Caco-2 (cell line): ENCODE measurements at regions of chr11 and their contacts with region 1.

Region 1: DNA sequence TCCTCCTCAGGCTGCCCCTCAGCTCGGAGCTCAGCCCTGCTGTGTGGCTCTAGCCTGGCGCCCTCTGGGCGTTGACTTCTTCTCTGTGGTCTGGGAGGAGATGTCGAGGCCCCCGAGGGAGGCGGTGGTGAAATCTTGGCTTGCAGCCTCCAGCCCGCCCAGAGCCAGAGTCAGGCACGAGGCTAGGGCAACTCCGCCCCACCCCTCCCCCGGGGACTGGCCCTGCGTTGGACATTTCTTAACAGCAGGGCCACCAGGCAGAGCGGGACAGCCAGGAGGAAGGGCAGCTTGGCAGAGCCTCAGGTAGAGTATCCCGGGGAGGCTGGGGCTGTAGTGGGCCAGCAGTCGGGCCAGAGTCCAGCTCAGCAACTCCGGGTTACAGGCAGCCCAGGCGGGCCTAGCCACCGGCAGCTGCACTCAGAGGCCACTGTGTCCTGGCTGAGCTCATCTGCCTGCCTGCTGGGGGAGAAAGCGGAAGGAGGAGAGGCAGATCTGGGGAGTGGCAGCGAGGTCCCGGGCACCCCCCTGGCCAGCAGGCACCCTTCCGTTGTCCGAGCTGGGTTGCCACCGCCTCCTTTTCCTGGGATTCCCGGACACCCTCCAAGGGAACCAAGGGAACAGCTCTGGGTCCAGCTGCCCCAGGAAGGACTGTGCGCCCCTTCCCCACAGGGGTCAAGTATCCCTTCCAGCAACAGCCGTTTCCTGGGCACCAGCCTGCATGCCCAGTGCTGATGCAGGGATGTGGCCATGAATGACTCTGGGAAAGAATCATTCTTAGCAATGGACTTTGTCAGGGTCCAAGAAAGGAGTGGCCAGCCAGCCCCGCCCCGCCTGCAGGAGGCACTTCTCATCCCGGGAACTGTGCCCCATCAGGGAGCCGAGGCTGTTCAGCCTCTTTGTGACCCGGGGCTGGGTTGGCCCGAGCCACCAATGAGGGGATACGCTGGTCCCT is at the start of gene ALDH3B1:
- DNase-seq: peak; percentile 90 to 94
- H3K4me3 ChIP-seq: peak within 1 kb of the TSS; percentile 22
- H3K4me3 Mint-ChIP-seq: peak within 1 kb of the TSS; percentile 79
- H3K27ac Mint-ChIP-seq: peak within 1 kb of the TSS; percentile 87
- H3K4me1 ChIP-seq: peaks cover 54% of the 10 kb centered on the region
- H3K4me1 Mint-ChIP-seq: peaks cover 30% of the 10 kb centered on the region
- H3K27me3 ChIP-seq: no peaks in the 10 kb centered on the region
- H3K27me3 Mint-ChIP-seq: no peaks in the 10 kb centered on the region
- CTCF ChIP-seq: no peak
- total RNA-seq, gene ALDH3B1: 8.2 and 9.1 TPM in 2 replicates

Region 2: GRCh38 chr11:68021167-68021787 is 10.9 kb after region 1 on chr11:
- CTCF ChIA-PET with region 1: interaction called, 9 read pairs
- POLR2A ChIA-PET with region 1: interaction called, 4 read pairs
- intact Hi-C with region 1: loop called (anchors 1 kb)
- DNase-seq: peak in 1 of 2 experiments; percentile 67
- H3K4me3 ChIP-seq: no peak overlapping the region
- H3K4me3 Mint-ChIP-seq: no peak overlapping the region
- H3K27ac Mint-ChIP-seq: no peak overlapping the region
- H3K4me1 ChIP-seq: peaks cover 16% of the 10 kb centered on the region
- H3K4me1 Mint-ChIP-seq: peaks cover 12% of the 10 kb centered on the region
- H3K27me3 ChIP-seq: no peaks in the 10 kb centered on the region
- H3K27me3 Mint-ChIP-seq: no peaks in the 10 kb centered on the region
- CTCF ChIP-seq: peak; percentile 27 to 59

Region 3: DNA sequence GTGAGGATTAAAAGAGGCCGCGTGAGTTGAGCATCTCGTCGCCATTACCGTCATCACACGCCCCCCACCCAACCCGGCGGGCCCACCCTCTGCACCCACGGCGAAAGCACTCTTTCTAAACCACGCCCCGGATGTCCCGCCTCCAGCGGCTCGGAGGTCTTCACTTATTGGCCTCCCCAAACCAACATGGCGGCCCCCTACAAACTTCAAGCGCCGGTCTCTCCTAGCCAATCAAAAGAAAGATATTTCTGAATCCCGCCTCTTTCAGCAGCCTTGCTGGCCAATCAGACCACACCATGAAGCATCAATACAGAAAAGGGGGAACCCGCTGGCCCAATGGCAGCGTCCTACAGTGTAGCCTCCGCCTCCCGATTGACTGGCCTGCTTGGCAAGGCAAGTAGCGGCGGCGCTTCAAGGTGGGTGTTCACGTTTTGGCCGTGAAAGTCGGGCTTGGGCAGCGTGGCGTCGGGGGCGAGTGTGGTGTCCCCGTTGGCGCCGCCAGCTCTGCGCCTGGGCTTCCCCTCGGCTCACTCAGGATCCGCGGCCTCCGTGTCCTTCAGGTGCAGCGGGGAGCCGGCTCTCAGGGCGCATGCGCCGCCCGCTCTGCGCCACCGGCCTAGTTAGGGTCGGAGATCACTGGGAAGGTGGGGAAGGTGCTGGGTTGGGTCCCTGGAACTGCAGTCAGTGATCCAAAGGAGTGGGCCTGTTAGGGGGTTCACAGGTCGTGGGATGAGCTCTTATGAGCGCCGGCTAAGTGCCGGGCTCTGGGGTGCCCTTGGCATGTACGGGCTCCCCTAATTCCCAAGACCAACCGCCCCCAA is 20.2 kb after region 1 on chr11 and contains the start of gene NDUFS8:
- CTCF ChIA-PET with region 1: interaction called, 5 read pairs
- POLR2A ChIA-PET with region 1: no interaction called
- intact Hi-C with region 1: loop called (anchors 1 kb)
- DNase-seq: peak; percentile 99 to 100
- H3K4me3 ChIP-seq: peak within 1 kb of the TSS; percentile 98
- H3K4me3 Mint-ChIP-seq: peak within 1 kb of the TSS; percentile 85
- H3K27ac Mint-ChIP-seq: peak within 1 kb of the TSS; percentile 90
- H3K4me1 ChIP-seq: peaks cover 13% of the 10 kb centered on the region
- H3K4me1 Mint-ChIP-seq: peaks cover 12% of the 10 kb centered on the region
- H3K27me3 ChIP-seq: no peaks in the 10 kb centered on the region
- H3K27me3 Mint-ChIP-seq: no peaks in the 10 kb centered on the region
- CTCF ChIP-seq: no peak
- total RNA-seq, gene NDUFS8: 309 and 334 TPM in 2 replicates

Region 4: DNA sequence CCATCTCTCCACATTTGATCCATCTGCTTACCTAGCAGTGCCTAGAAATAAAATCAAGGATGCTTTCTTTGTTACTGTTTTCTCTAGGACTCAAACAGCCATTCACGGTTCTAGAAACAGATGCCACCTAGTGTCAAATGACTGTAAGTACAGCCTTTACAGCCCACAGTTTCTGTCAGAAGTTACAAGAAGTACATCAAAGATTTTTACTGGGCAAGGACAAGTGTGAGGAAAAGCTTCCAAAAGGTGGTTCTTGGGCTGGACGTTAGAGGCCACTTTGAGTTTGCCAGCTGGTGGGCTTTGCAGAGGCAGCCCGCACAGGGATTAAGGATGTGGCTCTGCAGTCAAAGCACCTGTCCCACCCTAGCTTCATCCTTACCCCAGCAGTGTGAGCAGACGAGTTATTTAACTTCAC is 195.8 kb after region 1 on chr11:
- CTCF ChIA-PET with region 1: interaction called, 4 read pairs
- POLR2A ChIA-PET with region 1: no interaction called
- intact Hi-C with region 1: loop called (anchors 1 kb)
- DNase-seq: peak in 1 of 2 experiments; percentile 70
- H3K4me3 ChIP-seq: no peak overlapping the region
- H3K4me3 Mint-ChIP-seq: no peak overlapping the region
- H3K27ac Mint-ChIP-seq: no peak overlapping the region
- H3K4me1 ChIP-seq: peaks cover 8% of the 10 kb centered on the region; the same call in 1 of the 2 replicates
- H3K4me1 Mint-ChIP-seq: peaks cover 26% of the 10 kb centered on the region
- H3K27me3 ChIP-seq: no peaks in the 10 kb centered on the region
- H3K27me3 Mint-ChIP-seq: no peaks in the 10 kb centered on the region
- CTCF ChIP-seq: peak; percentile 89 to 95